Activated naive CD4-positive, alpha-beta T cell treated with anti-CD3 and anti-CD28 coated beads for 36 hours (primary cell): ENCODE measurements at regions of chr21 and their contacts with region 1.

Region 1: DNA sequence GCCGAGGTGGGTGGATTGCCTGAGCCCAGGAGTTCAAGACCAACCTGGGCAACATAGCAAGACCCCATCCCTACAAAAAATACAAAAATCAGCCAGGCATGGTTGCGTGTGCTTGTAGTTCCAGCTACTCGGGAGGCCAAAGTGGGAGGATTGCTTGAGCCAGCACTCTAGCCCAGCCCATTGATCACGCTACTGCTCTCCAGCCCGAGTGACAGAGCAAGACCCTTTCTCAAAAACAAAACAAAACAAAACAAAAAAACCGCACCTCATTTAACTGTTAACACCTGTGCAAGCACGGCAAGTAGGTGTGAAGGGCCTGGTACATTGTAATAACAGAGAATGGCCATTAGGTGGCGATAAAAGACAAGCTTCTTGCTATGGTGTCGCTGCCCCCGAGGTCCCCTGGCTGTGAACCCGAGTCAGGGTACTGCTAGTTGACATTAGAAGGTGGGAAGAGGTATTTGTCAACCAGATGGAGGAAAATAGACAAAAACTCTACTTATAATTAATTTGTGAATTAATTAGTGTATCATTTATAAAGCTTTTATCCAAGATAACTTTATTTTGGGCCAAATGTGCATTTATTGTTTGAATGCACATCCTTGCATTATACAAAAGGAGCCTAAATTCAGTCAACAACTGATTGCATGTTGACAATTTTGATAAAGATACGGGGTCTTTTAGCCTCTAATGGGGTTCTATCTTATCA is 66.5 kb downstream of the SH3BGR start:
- DNase-seq: peak; percentile 42
- H3K4me3 Mint-ChIP-seq: no peak overlapping the region
- H3K27ac Mint-ChIP-seq: no peak overlapping the region
- H3K4me1 Mint-ChIP-seq: no peaks in the 10 kb centered on the region
- H3K27me3 Mint-ChIP-seq: no peaks in the 10 kb centered on the region

Region 2: DNA sequence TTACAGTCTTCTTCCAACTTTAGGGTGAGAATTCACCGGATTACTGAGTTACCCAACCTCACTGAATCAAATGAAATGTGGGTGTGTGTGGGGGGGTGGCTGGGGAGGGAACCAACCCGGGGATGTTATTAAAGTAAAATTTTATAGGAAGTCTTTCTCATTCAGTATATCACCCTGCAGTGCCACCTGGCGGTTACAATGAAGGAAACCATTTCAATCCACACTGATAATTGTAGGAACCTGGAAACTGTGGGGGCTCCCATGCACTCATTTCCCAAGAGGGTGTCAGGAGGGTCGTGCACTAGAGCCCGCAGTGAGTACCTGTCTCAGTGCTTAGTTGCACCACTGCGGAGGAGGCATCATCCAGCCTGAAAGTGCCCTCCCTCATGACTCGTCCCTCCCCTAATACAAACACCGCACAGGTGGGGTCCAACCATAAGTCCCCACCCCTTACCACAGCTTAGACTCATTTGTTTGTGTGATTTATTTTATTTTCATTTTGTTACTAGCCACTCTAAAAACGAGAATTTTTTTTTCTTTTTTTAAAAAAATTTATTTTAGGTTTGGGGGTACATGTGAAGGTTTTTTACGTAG is 197.6 kb after region 1 on chr21:
- CTCF ChIA-PET with region 1: interaction called, 28 read pairs
- intact Hi-C with region 1: loop called (anchors 1 kb)
- DNase-seq: peak; percentile 56
- H3K4me3 Mint-ChIP-seq: no peak overlapping the region
- H3K27ac Mint-ChIP-seq: no peak overlapping the region
- H3K4me1 Mint-ChIP-seq: no peaks in the 10 kb centered on the region
- H3K27me3 Mint-ChIP-seq: peaks cover 11% of the 10 kb centered on the region

Region 3: DNA sequence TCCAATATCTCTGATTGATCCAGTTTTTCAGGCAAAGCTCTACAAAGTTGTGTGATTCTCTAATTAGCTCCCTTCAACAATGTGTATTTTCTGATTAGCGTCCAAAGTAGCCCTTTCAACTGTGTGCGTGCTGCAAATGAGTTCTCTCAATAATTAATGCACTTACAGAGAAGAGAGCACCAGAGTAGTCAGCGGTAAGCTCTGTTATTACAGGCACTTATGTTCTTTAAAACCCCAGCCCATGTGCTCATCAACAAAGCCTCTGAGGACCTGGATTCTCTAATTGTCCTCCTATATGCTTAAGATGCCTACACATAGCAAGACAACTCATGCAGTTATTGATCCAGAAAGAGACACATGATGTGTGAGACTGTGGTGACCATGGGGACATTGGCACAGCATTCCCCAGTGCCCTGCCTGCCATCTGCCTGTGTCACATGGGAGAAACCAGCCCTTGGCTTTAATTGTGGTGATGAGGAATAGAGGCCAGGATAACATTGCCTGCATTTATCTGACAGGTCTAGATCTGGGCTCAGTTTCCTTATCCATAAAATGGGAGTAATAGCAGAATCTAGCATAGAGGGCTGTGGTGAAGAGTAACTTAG is 500.7 kb after region 1 on chr21:
- CTCF ChIA-PET with region 1: no interaction called
- intact Hi-C with region 1: no loop called
- DNase-seq: no peak
- H3K4me3 Mint-ChIP-seq: no peak overlapping the region
- H3K27ac Mint-ChIP-seq: no peak overlapping the region
- H3K4me1 Mint-ChIP-seq: no peaks in the 10 kb centered on the region
- H3K27me3 Mint-ChIP-seq: no peaks in the 10 kb centered on the region

Region 4: GRCh38 chr21:40120940-40121575 is 602.8 kb after region 1 on chr21:
- CTCF ChIA-PET with region 1: interaction called, 4 read pairs
- intact Hi-C with region 1: loop called (anchors 10 kb)
- DNase-seq: no peak
- H3K4me3 Mint-ChIP-seq: no peak overlapping the region
- H3K27ac Mint-ChIP-seq: no peak overlapping the region
- H3K4me1 Mint-ChIP-seq: no peaks in the 10 kb centered on the region
- H3K27me3 Mint-ChIP-seq: peaks cover 4% of the 10 kb centered on the region